Activated CD4-positive, alpha-beta memory T cell treated with anti-CD3 and anti-CD28 coated beads, Interleukin-2, amount 10 ng/mL, durations not matched to agents 7 days and 5 days (primary cell): ENCODE measurements at regions of chr1 and their contacts with region 1.

Region 1: DNA sequence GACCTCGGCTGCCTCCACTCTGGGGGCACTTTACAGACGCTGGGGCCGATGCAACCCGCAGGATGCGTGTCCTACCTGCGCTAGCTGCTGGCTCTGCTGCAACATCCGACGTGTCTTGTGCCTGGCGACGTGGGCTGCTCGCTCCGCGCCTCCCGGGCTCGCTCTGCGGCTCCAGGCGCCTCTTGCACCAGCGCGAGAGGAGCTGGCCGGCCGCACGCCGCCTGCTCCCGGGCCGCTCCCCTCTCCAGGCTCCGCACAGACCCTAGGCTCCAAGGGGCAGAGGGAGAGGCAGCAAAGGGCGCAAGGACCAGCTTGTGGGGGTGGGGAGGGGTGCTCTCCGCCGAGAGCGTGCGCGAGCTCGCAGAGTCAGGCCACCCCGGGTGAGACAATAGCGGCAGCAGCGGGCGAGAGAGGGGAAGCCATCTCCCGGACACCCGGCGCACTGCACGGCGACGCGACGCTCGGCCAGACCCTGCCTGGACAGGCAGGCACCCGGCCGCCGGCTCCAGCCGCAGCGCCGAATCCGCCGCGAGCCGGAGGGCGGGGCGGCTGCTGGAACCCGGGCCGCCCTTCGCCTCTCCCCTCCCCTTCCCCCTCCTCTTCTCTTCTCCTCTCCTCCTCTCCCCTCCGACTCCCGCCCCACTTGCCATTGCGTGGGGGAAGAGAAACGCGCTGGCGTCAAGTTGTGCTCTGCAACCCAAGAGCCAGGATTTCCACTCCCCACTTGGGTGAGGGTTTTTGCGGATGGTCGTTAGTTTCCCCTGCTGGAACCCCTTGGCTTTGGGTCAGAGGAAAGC is at the start of gene PIK3C2B:
- DNase-seq: peak; percentile 77
- H3K4me3 Mint-ChIP-seq: peak within 1 kb of the TSS; percentile 88
- H3K27ac Mint-ChIP-seq: peak within 1 kb of the TSS; percentile 84
- H3K4me1 Mint-ChIP-seq: peaks cover 58% of the 10 kb centered on the region
- H3K27me3 Mint-ChIP-seq: no peaks in the 10 kb centered on the region
- total RNA-seq, gene PIK3C2B: 31.0 to 32.0 TPM

Region 2: GRCh38 chr1:204411451-204412204 is 82.9 kb before region 1 on chr1 and contains the start of gene PPP1R15B:
- CTCF ChIA-PET with region 1: interaction called, 7 read pairs
- POLR2A ChIA-PET with region 1: interaction called, 12 read pairs
- DNase-seq: peak; percentile 98
- H3K4me3 Mint-ChIP-seq: peak within 1 kb of the TSS; percentile 98
- H3K27ac Mint-ChIP-seq: peak within 1 kb of the TSS; percentile 98
- H3K4me1 Mint-ChIP-seq: peaks cover 19% of the 10 kb centered on the region
- H3K27me3 Mint-ChIP-seq: no peaks in the 10 kb centered on the region
- total RNA-seq, gene PPP1R15B: 76.0 to 76.1 TPM

Region 3: GRCh38 chr1:204431310-204432165 is 62.9 kb before region 1 on chr1:
- CTCF ChIA-PET with region 1: interaction called, 370 read pairs
- POLR2A ChIA-PET with region 1: interaction called, 5 read pairs
- DNase-seq: peak; percentile 81
- H3K4me3 Mint-ChIP-seq: no peak overlapping the region
- H3K27ac Mint-ChIP-seq: no peak overlapping the region
- H3K4me1 Mint-ChIP-seq: no peaks in the 10 kb centered on the region
- H3K27me3 Mint-ChIP-seq: no peaks in the 10 kb centered on the region

Region 4: DNA sequence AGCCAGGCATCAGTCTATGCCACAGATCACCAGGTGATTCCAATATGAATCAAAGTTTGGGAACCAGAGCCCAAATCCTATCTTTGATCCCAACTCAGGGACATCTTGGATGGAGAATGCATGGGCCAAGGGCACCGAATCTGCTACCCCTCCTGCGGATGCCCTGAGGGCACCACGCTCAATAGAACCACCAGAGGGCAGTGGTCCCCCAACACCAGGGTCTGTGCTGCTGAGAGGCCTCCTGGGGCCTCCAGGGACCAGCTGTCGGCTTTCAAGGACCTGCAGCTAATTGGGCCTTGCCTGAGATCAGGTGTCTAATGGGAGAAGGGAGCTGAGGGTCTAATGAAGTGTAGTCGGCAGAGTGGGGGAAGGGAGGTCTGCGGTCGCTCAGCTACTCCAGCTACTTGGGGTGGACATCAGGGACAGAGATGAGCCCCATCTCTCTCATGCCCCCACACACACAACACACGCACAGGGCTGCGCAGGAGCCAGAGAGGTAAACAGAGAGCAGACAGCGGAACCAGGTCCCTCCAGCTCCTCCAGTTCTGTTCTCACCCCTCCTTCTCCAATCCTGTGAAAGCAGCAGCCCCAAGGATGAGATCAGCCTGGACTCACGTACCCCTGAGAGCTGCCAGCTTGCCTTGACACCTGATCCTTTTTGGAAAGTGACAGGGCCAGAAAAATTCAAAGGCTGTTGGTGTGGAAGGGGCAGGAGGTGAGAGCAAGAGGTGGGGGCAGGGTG is 47.9 kb before region 1 on chr1:
- CTCF ChIA-PET with region 1: interaction called, 519 read pairs
- POLR2A ChIA-PET with region 1: interaction called, 57 read pairs
- DNase-seq: peak; percentile 79
- H3K4me3 Mint-ChIP-seq: no peak overlapping the region
- H3K27ac Mint-ChIP-seq: peak overlapping the region; percentile 57
- H3K4me1 Mint-ChIP-seq: peaks cover 61% of the 10 kb centered on the region
- H3K27me3 Mint-ChIP-seq: no peaks in the 10 kb centered on the region

Region 5: DNA sequence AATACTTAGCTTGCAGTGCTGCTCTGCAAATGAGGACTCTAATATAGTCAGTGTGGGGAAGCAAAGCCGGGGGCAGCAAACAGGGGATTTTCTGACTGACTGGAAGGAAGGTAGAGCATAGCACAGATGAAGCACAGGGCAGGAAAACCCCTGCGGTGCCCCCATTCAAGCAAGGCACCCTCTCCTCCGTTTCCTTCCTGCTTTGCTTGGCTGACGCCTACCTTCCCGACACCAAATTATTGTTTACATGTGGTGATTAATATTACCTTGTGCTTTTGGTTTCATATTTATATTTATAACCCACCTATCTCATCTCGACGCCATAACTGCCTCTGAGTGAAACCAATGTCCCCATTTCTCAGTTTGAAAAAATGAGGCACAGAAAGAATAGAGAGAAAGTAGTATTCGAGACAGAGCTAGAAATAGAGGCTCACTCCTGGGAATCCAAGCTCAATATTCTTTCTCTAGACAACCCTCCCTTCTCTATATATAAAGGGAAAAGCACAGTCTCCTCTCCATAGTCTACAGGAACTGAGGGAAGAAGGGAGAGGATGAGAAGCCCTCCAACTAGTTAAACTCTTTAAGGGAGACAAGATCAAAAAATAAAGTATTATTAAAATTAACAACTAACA is 41.2 kb before region 1 on chr1:
- CTCF ChIA-PET with region 1: interaction called, 519 read pairs
- POLR2A ChIA-PET with region 1: interaction called, 57 read pairs
- DNase-seq: peak; percentile 73
- H3K4me3 Mint-ChIP-seq: peak overlapping the region; percentile 46
- H3K27ac Mint-ChIP-seq: peak overlapping the region; percentile 86
- H3K4me1 Mint-ChIP-seq: peaks cover 47% of the 10 kb centered on the region
- H3K27me3 Mint-ChIP-seq: no peaks in the 10 kb centered on the region

Region 6: DNA sequence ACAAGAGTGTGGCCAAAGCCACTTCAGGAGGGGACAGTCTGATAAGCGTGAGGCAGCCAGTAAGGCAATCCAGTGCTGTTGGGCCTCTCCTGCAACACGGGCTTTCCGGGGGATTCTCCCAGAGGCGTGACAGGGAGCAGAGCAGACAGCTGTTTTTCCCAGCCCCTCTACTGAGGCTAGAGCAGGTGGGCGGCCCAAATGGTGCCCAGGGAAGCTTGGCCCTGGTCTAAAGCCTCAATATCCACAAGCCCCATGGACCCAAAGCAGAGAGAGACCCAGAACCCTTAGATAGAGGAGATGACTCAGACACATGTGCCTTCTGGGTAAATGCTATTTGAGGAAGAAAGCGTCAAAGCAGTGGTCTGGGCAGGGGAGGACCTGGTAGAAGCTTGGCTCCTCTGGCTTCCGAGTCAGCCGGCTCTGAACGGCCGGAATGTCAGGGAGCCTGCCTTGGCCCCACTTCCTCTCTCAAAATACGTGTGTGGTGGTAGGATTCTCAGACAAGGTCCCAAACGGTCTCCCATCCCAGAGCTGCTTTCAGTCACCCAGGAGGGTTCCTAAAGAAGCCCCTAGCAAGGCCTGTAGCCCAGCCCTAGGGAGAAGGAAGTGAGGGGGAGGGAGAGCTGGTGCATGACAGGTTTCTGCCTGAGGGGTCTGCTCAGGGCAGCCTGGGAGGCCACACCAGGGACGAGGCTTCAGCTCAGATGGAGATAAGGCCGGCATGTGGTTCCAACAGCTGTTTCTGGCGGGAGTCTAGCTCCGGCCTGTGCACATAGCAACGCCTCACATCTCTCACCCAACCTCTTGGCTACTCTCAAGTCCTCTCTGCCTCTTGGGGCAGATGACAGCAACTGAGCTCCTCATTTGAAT is 28.7 kb before region 1 on chr1:
- CTCF ChIA-PET with region 1: interaction called, 6 read pairs
- POLR2A ChIA-PET with region 1: interaction called, 11 read pairs
- DNase-seq: no peak
- H3K4me3 Mint-ChIP-seq: no peak overlapping the region
- H3K27ac Mint-ChIP-seq: peak overlapping the region; percentile 16
- H3K4me1 Mint-ChIP-seq: peaks cover 50% of the 10 kb centered on the region
- H3K27me3 Mint-ChIP-seq: no peaks in the 10 kb centered on the region

Region 7: GRCh38 chr1:204516180-204516879 is 21.9 kb after region 1 on chr1 and contains the start of gene MDM4:
- CTCF ChIA-PET with region 1: interaction called, 17 read pairs
- POLR2A ChIA-PET with region 1: interaction called, 26 read pairs
- DNase-seq: peak; percentile 95
- H3K4me3 Mint-ChIP-seq: no peak within 1 kb of the TSS
- H3K27ac Mint-ChIP-seq: no peak within 1 kb of the TSS
- H3K4me1 Mint-ChIP-seq: peaks cover 64% of the 10 kb centered on the region
- H3K27me3 Mint-ChIP-seq: no peaks in the 10 kb centered on the region
- total RNA-seq, gene MDM4: 85.1 to 95.4 TPM